T-cell (primary cell): ENCODE measurements at regions of chr3 and their contacts with region 1.

Region 1: DNA sequence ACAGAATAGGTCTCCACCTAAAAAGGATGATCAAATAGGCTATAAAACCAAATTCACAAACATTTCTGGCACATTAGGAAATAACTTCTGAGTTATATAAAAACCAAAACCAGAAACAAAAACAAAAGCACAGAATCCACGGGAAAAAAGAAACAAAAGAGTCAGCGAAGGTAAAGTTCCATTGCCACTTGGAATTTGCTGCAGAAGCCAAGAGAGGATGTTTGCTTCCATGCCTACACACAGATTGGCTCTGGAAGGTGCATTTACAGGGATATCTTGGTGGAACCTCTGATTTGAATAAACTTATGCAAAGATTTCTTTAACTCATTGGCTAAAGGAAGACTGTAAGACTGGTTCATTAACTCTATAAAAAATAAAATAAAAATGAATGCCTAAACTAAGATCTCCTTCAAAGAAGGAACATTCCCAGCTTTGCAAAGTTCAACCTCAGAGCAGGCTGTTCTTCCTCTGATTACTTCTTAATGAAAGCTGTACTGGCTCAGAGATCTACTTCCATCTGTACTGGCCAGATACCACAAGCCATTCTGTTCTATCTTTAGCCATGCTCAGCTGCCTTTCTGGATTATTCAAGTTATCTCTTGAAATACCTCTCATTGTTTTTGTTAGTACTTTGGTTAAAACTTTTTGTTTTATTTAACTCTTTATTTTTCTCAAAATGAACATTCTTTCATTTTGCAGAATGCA is 537.5 kb upstream of the CCDC54 start:
- DNase-seq: no peak
- ATAC-seq: no peak
- H3K4me3 ChIP-seq: no peak overlapping the region
- H3K4me3 Mint-ChIP-seq: no peak overlapping the region
- H3K27ac ChIP-seq: no peak overlapping the region
- H3K27ac Mint-ChIP-seq: no peak overlapping the region
- H3K4me1 ChIP-seq: no peaks in the 10 kb centered on the region
- H3K4me1 Mint-ChIP-seq: no peaks in the 10 kb centered on the region
- H3K27me3 ChIP-seq: no peaks in the 10 kb centered on the region
- H3K27me3 Mint-ChIP-seq: no peaks in the 10 kb centered on the region

Region 2: DNA sequence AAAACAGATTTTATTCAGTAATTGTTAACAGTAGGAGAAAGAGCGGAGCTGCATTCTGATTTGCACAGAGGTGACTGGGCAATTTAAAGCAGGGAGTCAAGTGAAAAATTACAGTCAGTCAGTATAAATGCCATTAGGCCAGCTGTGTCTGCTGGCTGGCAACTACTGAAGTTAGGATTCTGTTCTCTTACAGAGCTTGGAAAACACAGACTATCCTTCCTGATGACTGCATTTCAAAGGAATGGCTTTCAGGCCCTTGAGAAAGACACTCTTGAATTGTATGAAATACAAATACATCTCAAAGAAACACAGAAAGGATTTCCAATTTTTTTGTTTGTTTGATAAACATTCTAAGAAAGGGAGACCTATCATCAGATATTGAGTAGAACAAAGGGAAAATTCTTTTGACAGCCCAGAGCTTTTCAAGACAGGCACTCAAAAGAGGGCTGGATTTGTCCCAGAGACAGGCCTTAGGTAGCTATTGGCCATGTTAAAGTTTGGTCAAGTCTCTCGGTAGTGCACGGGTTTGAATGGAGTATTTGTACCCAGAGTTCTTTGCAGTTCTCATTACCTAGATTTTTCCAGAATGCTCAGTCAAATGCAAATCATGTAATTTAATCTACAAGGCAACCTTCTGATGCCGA is 13.6 kb before region 1 on chr3:
- CTCF ChIA-PET with region 1: no interaction called
- POLR2A ChIA-PET with region 1: interaction called in 1 of 2 experiments, 16 read pairs
- DNase-seq: no peak
- ATAC-seq: no peak
- H3K4me3 ChIP-seq: no peak overlapping the region
- H3K4me3 Mint-ChIP-seq: no peak overlapping the region
- H3K27ac ChIP-seq: no peak overlapping the region
- H3K27ac Mint-ChIP-seq: no peak overlapping the region
- H3K4me1 ChIP-seq: peaks cover 0 to 5% of the 10 kb centered on the region in 2 experiments
- H3K4me1 Mint-ChIP-seq: peaks cover 0 to 7% (median 5%) of the 10 kb centered on the region in 3 donors
- H3K27me3 ChIP-seq: peaks cover 0 to 3% of the 10 kb centered on the region in 2 experiments
- H3K27me3 Mint-ChIP-seq: peaks cover 0 to 2% of the 10 kb centered on the region in 2 donors

Region 3: DNA sequence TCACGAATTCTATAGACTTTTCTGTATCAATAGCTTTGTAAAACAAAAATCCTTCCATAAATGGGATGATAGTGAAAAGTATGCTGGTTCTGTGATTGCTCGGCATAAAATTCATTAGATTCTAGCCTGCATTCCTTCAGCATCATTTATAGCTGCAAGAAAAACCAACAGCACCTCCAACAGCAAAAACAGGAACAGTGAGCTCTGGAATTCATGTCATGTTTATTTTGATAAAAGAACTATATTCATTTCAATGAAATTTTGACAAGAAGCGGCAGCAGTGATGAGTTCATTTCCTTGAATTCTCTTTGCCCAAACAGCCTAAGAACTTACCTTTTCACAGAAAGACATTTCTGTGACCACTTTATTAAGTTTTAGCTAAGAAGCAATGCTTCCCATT is 22.3 kb after region 1 on chr3:
- CTCF ChIA-PET with region 1: no interaction called
- POLR2A ChIA-PET with region 1: no interaction called
- DNase-seq: no peak
- ATAC-seq: no peak
- H3K4me3 ChIP-seq: no peak overlapping the region
- H3K4me3 Mint-ChIP-seq: no peak overlapping the region
- H3K27ac ChIP-seq: no peak overlapping the region
- H3K27ac Mint-ChIP-seq: no peak overlapping the region
- H3K4me1 ChIP-seq: no peaks in the 10 kb centered on the region
- H3K4me1 Mint-ChIP-seq: no peaks in the 10 kb centered on the region
- H3K27me3 ChIP-seq: no peaks in the 10 kb centered on the region
- H3K27me3 Mint-ChIP-seq: no peaks in the 10 kb centered on the region

Region 4: GRCh38 chr3:107106316-107106715 is 266.6 kb after region 1 on chr3:
- CTCF ChIA-PET with region 1: no interaction called
- POLR2A ChIA-PET with region 1: no interaction called
- DNase-seq: no peak
- ATAC-seq: no peak
- H3K4me3 ChIP-seq: no peak overlapping the region
- H3K4me3 Mint-ChIP-seq: no peak overlapping the region
- H3K27ac ChIP-seq: no peak overlapping the region
- H3K27ac Mint-ChIP-seq: no peak overlapping the region
- H3K4me1 ChIP-seq: no peaks in the 10 kb centered on the region
- H3K4me1 Mint-ChIP-seq: no peaks in the 10 kb centered on the region
- H3K27me3 ChIP-seq: peaks cover 0 to 3% of the 10 kb centered on the region in 2 experiments
- H3K27me3 Mint-ChIP-seq: peaks cover 1 to 12% of the 10 kb centered on the region in 2 donors